ENCODE measurements at regions of chr12 and their contacts with region 1.

Region 1: DNA sequence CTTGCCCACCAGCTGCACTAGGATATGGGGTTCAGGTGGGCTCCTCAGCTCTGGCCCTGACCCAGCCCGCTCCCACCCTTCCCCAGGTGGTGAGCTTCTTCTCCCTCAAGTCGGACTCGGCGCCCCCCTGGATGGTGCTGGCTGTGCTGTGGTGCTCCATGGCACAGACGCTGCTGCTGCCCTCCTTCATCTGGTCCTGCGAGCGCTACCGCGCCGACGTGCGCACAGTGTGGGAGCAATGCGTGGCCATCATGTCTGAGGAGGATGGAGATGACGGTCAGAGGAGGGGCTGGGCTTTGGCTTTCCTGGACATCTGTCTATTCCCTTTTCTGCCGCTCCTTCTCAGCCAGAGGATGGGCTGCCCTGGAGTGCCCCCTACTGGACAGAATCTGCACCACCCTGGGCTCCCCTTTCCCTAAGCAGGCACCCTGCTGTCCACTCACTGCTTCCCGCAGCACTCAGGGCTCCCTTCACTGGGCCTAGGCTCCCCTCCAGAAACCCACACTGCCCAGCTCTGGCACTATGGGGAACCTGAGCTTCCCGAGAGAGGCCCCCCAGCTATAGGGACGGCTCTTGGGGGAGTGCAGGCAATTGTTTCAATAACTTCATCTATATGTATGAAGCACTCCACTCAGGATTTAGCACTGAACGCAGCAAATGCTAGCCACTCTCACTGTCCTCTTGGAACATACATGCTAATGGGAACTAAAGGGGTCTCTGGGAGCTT is 2.6 kb upstream of the P3H3 start:
- DNase-seq: peak; percentile 61 to 98
- H3K4me3 ChIP-seq: peak overlapping the region; percentile 8 to 53 (median 28); a peak in 7 of 8 replicates
- H3K27ac ChIP-seq: no peak overlapping the region
- H3K4me1 ChIP-seq: peaks cover 8 to 45% (median 29%) of the 10 kb centered on the region in 4 experiments
- H3K27me3 ChIP-seq: peaks cover 0 to 12% (median 8%) of the 10 kb centered on the region in 4 experiments; a peak in 5 of 7 replicates
- CTCF ChIP-seq: peak in 2 of 3 experiments; percentile 91 to 95; a peak in 3 of 4 replicates
- EP300 ChIP-seq: no peak
- POLR2A ChIP-seq: no peak
- RAD21 ChIP-seq: peak; percentile 88 to 93

Region 2: DNA sequence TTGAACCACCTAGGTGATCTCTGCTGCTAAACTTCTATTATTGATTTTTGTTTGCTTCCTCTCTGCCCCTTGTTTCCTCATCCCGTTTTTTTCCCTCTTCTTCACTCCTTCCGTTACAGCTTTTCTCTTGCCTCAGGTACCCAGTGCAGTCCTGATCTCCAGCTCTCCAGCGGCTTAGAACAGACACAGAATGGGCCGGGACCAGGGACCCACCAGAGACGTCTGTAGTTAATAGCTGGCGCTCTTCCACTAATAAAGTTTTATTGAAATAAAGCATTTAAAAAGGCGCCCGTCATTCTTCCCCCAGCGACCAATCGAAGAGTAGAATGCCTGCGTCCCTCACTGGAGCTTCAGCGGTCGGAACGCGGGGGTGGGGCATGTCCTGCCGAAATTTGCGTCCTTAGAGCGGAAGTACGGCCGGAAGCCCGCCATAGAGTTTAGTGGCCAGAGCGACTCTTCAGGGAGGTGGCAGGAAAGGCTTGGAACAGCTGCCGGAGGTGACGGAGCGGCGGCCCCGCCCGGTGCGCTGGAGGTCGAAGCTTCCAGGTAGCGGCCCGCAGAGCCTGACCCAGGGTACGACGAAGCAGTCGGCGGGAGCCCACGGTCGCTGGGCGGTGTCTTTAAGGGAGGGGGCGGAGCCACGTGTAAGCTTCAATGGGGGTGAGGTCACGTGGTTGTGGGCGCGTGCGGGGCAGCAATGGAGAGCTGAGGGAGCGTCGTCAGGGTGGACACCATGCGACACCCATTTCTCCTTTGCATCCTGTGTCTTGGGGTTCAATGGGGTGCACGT is 101.8 kb before region 1 on chr12 and contains the start of gene COPS7A:
- CTCF ChIA-PET with region 1: interaction called, 20 read pairs
- POLR2A ChIA-PET with region 1: interaction called, 4 read pairs
- DNase-seq: peak; percentile 95 to 98
- H3K4me3 ChIP-seq: peak within 1 kb of the TSS; percentile 58 to 91 (median 78)
- H3K27ac ChIP-seq: no peak within 1 kb of the TSS; the same call in 1 of the 2 replicates
- H3K4me1 ChIP-seq: peaks cover 0 to 2% (median under 1%) of the 10 kb centered on the region in 4 experiments; a peak in 3 of 7 replicates
- H3K27me3 ChIP-seq: no peaks in the 10 kb centered on the region; a peak in 2 of 7 replicates
- CTCF ChIP-seq: peak in 1 of 3 experiments; percentile 24; a peak in 1 of 4 replicates
- EP300 ChIP-seq: peak; percentile 21 to 63; a peak in 1 of 3 replicates
- POLR2A ChIP-seq: peak in 1 of 2 experiments; percentile 54; a peak in 2 of 3 replicates
- RAD21 ChIP-seq: 0 out of 4 replicates have a peak, but pooled peaks of 1 of the 2 experiments have one; percentile 2
- total RNA-seq, gene COPS7A: 43.3 and 44.5 TPM in 2 replicates

Region 3: DNA sequence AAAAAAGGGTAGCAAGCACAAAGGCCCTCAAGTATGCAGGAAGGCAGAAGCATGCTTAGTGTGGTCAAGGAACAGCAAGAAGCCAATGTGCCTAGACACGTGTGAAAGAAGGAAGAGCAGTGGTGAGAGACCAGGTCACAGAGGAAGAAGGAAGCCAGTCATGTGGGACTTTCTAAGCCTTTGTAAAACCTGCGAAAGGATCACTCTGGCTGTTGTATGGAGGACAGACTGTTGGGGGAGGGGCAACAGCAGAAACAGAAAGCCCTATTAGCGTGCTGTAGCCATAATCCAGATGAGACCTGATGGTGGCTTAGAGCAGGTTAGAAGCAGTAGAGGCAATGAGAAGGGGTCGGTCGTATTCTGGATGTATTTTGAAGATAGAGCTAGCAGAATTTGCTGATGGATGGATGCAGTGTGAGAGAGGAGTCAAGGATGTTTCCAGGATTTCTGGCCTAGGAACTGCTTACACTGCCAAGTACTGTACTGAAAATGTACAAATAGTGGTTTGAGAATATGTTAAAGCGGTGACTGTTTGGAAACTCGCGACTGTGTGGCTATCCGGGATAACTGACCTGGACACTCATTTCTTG is 67.0 kb before region 1 on chr12:
- CTCF ChIA-PET with region 1: interaction called, 296 read pairs
- POLR2A ChIA-PET with region 1: interaction called, 75 read pairs
- DNase-seq: no peak
- H3K4me3 ChIP-seq: no peak overlapping the region
- H3K27ac ChIP-seq: no peak overlapping the region
- H3K4me1 ChIP-seq: peaks cover 0 to 9% (median 3%) of the 10 kb centered on the region in 4 experiments; a peak in 4 of 7 replicates
- H3K27me3 ChIP-seq: no peaks in the 10 kb centered on the region
- CTCF ChIP-seq: no peak
- EP300 ChIP-seq: no peak
- POLR2A ChIP-seq: no peak
- RAD21 ChIP-seq: no peak

Region 4: GRCh38 chr12:6771091-6771495 is 54.5 kb before region 1 on chr12:
- CTCF ChIA-PET with region 1: interaction called, 532 read pairs
- POLR2A ChIA-PET with region 1: interaction called, 56 read pairs
- DNase-seq: no peak
- H3K4me3 ChIP-seq: no peak overlapping the region
- H3K27ac ChIP-seq: no peak overlapping the region
- H3K4me1 ChIP-seq: peaks cover 4 to 36% (median 25%) of the 10 kb centered on the region in 4 experiments
- H3K27me3 ChIP-seq: peaks cover 0 to 27% (median 21%) of the 10 kb centered on the region in 4 experiments; a peak in 5 of 7 replicates
- CTCF ChIP-seq: no peak
- EP300 ChIP-seq: no peak
- POLR2A ChIP-seq: no peak
- RAD21 ChIP-seq: no peak

Region 5: DNA sequence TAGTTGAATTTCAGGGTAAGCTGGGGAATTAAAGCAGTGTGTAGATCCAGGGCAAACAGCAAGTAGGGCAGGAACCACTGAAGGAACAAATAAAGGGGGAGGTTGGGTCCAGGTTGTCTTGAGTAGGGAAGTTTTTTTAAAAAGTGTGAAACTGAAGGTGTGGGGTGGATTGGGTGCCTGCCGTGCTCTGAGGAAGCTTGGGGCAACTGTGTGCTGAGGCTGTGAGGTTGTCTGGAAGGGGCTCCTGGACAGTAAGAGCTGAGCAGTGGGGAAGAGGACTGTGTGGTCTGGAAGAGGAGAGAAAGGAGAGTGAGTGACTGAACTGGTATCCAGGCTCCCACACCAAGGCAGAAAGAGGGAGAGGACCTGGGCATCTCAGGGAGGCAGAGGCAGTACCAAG is 14.8 kb before region 1 on chr12:
- CTCF ChIA-PET with region 1: interaction called, 45 read pairs
- POLR2A ChIA-PET with region 1: interaction called, 8 read pairs
- DNase-seq: no peak
- H3K4me3 ChIP-seq: no peak overlapping the region
- H3K27ac ChIP-seq: no peak overlapping the region
- H3K4me1 ChIP-seq: peaks cover 0 to 4% (median 2%) of the 10 kb centered on the region in 4 experiments; a peak in 4 of 7 replicates
- H3K27me3 ChIP-seq: no peaks in the 10 kb centered on the region; a peak in 3 of 7 replicates
- CTCF ChIP-seq: no peak
- EP300 ChIP-seq: no peak
- POLR2A ChIP-seq: no peak
- RAD21 ChIP-seq: no peak

Region 6: GRCh38 chr12:6867413-6868210 is 42.1 kb after region 1 on chr12 and contains the start of gene TPI1:
- CTCF ChIA-PET with region 1: interaction called, 12 read pairs
- POLR2A ChIA-PET with region 1: interaction called, 45 read pairs
- DNase-seq: peak in 1 of 2 experiments; percentile 67
- H3K4me3 ChIP-seq: peak within 1 kb of the TSS; percentile 84 to 98 (median 86)
- H3K27ac ChIP-seq: peak within 1 kb of the TSS; percentile 71
- H3K4me1 ChIP-seq: peaks cover 7 to 48% (median 25%) of the 10 kb centered on the region in 4 experiments
- H3K27me3 ChIP-seq: no peaks in the 10 kb centered on the region
- CTCF ChIP-seq: no peak
- EP300 ChIP-seq: no peak
- POLR2A ChIP-seq: peak in 1 of 2 experiments; percentile 97; a peak in 2 of 3 replicates
- RAD21 ChIP-seq: no peak
- total RNA-seq, gene TPI1: 902 and 910 TPM in 2 replicates